Right lobe of liver (tissue), 6 donors: ENCODE measurements at regions of chr12 and their contacts with region 1.

Region 1: GRCh38 chr12:569803-570434 is 93.3 kb downstream of the NINJ2 start:
- DNase-seq: peak; percentile 85 to 89 (median 88)
- ATAC-seq: peak; percentile 72 to 82 (median 77)
- H3K4me3 ChIP-seq: peak overlapping the region; percentile 53 to 65 (median 64)
- H3K27ac ChIP-seq: peak overlapping the region; percentile 61 to 90 (median 74)
- H3K4me1 ChIP-seq: peaks cover 0 to 20% (median 0%) of the 10 kb centered on the region in 4 donors
- H3K27me3 ChIP-seq: no peaks in the 10 kb centered on the region
- CTCF ChIP-seq: peak; percentile 94 to 96 (median 96)
- POLR2A ChIP-seq: no peak

Region 2: GRCh38 chr12:84056-84455 is 485.9 kb before region 1 on chr12:
- intact Hi-C with region 1: no loop called
- DNase-seq: no peak
- ATAC-seq: no peak
- H3K4me3 ChIP-seq: no peak overlapping the region
- H3K27ac ChIP-seq: no peak overlapping the region
- H3K4me1 ChIP-seq: no peaks in the 10 kb centered on the region
- H3K27me3 ChIP-seq: no peaks in the 10 kb centered on the region
- CTCF ChIP-seq: no peak
- POLR2A ChIP-seq: no peak

Region 3: GRCh38 chr12:468671-469389 is 101.1 kb before region 1 on chr12:
- intact Hi-C with region 1: no loop called
- DNase-seq: no peak
- ATAC-seq: no peak
- H3K4me3 ChIP-seq: no peak overlapping the region
- H3K27ac ChIP-seq: no peak overlapping the region
- H3K4me1 ChIP-seq: no peaks in the 10 kb centered on the region
- H3K27me3 ChIP-seq: no peaks in the 10 kb centered on the region
- CTCF ChIP-seq: no peak
- POLR2A ChIP-seq: no peak

Region 4: GRCh38 chr12:751192-751998 is 181.5 kb after region 1 on chr12:
- intact Hi-C with region 1: loop called in 1 of 2 experiments (anchors 5 kb)
- DNase-seq: peak; percentile 93
- ATAC-seq: peak; percentile 62 to 75 (median 71)
- H3K4me3 ChIP-seq: peak overlapping the region; percentile 28 to 81 (median 74)
- H3K27ac ChIP-seq: peak overlapping the region; percentile 53 to 77 (median 60)
- H3K4me1 ChIP-seq: peaks cover 0 to 18% (median 4%) of the 10 kb centered on the region in 4 donors
- H3K27me3 ChIP-seq: no peaks in the 10 kb centered on the region
- CTCF ChIP-seq: peak; percentile 63 to 81 (median 68)
- POLR2A ChIP-seq: peak; percentile 66

Region 5: DNA sequence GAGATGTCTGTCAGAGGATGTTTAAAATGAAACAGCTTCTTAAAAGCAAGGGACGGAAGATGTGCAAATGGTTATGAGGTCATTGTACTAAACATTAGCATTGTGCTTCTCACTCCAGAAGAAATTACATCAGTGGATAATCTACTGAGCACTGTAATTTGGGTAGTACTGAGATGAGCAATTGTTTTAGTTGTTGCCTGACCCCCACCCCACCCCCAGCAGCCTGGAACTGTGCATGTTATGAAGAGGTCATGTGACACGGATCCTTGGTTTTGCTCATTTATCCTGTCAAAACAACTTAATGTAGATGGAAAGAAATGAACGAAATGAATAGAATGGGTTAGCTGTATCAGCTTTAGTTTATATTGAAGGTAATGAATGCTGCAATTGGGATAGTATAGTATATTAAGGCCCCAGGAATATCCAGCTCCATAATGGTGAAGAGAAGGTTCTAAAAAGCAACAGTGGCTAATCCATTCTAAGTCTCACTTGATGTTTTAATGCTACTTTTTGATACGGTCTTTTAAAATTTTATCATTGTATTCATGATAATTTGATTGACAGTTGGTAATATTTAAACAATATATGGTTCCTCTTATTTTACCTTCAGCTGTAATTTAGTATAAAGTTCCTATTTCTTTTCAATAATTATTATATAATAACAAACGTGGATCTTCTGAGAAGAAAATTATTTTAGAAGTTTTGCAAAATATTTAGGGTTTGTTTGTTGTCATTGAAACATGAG is 240.9 kb after region 1 on chr12:
- intact Hi-C with region 1: loop called in 1 of 2 experiments (anchors 10 kb)
- DNase-seq: no peak
- ATAC-seq: no peak
- H3K4me3 ChIP-seq: no peak overlapping the region
- H3K27ac ChIP-seq: no peak overlapping the region
- H3K4me1 ChIP-seq: peaks cover 0 to 9% (median 4%) of the 10 kb centered on the region in 4 donors
- H3K27me3 ChIP-seq: no peaks in the 10 kb centered on the region
- CTCF ChIP-seq: no peak
- POLR2A ChIP-seq: no peak

Region 6: GRCh38 chr12:949453-950191 is 379.7 kb after region 1 on chr12 and contains the start of gene RAD52:
- intact Hi-C with region 1: loop called in 1 of 2 experiments (anchors 5 kb)
- DNase-seq: peak; percentile 97 to 98 (median 98)
- ATAC-seq: peak; percentile 92 to 97 (median 95)
- H3K4me3 ChIP-seq: peak within 1 kb of the TSS; percentile 76 to 93 (median 91)
- H3K27ac ChIP-seq: peak within 1 kb of the TSS; percentile 66 to 82 (median 77)
- H3K4me1 ChIP-seq: peaks cover 0 to 10% (median 0%) of the 10 kb centered on the region in 4 donors
- H3K27me3 ChIP-seq: no peaks in the 10 kb centered on the region
- CTCF ChIP-seq: peak; percentile 99
- POLR2A ChIP-seq: peak; percentile 74
- total RNA-seq, gene RAD52: 5.6 to 10.5 (median 8.5) TPM

Region 7: DNA sequence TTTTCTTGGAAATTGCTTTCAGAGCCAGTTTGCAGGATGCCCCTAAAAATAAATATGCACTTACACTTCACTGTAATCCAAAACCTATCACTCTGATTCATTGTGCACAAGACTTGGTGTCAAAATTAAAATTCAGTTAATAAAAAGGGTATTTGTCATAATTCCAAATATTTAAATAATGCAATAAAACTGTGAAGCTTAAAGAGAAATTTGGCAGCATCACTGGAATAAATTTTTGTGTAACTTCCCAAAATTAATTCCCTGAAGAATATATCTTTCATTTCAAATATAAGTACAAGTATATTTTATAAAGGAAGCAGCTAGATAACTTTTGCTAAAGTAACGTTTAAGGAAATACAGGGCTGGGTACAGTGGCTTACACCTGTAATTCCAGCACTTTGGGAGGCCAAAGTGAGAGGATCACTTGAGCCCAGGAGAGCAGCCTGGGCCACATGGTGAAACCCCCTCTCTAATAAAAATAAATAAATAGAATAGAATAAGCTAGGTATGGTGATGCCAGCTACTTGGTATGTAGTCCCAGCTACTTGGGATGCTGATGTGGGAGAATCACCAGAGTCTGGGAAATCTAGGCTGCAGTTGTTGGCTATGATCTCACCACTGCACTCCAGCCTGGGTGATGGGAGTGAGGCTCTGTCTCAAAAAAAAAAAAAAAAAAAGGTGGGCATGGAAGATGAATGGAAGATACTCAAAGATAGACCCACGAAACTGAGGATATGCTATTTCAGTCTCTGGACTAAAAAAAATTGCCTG is 790.7 kb after region 1 on chr12:
- intact Hi-C with region 1: no loop called
- DNase-seq: no peak
- ATAC-seq: no peak
- H3K4me3 ChIP-seq: no peak overlapping the region
- H3K27ac ChIP-seq: no peak overlapping the region
- H3K4me1 ChIP-seq: peaks cover 0 to 5% (median 2%) of the 10 kb centered on the region in 4 donors
- H3K27me3 ChIP-seq: no peaks in the 10 kb centered on the region
- CTCF ChIP-seq: no peak
- POLR2A ChIP-seq: no peak